ENCODE measurements at regions of chr9 and their contacts with region 1.

Region 1: GRCh38 chr9:105053209-105053652 is 125.3 kb upstream of the ABCA1 start:
- DNase-seq: peak; percentile 97 to 99 (median 99)
- H3K4me3 ChIP-seq: no peak overlapping the region
- H3K4me3 Mint-ChIP-seq: peak overlapping the region in 1 of 2 donors; percentile 77
- H3K27ac ChIP-seq: peak overlapping the region; percentile 90 to 99
- H3K27ac Mint-ChIP-seq: peak overlapping the region; percentile 93 to 99 (median 97)
- H3K4me1 ChIP-seq: peaks cover 32 to 34% of the 10 kb centered on the region in 2 donors
- H3K4me1 Mint-ChIP-seq: peaks cover 37% of the 10 kb centered on the region
- H3K27me3 ChIP-seq: no peaks in the 10 kb centered on the region
- H3K27me3 Mint-ChIP-seq: peaks cover 0 to 7% (median 0%) of the 10 kb centered on the region in 3 donors
- CTCF ChIP-seq: no peak

Region 2: GRCh38 chr9:104780799-104781395 is 272.3 kb before region 1 on chr9:
- intact Hi-C with region 1: loop called in 1 of 2 experiments (anchors 10 kb)
- DNase-seq: peak; percentile 54 to 79 (median 72)
- H3K4me3 ChIP-seq: no peak overlapping the region
- H3K4me3 Mint-ChIP-seq: peak overlapping the region in 1 of 2 donors; percentile 39
- H3K27ac ChIP-seq: peak overlapping the region in 1 of 2 donors; percentile 74
- H3K27ac Mint-ChIP-seq: peak overlapping the region; percentile 77 to 91 (median 88)
- H3K4me1 ChIP-seq: peaks cover 34 to 45% of the 10 kb centered on the region in 2 donors
- H3K4me1 Mint-ChIP-seq: peaks cover 22% of the 10 kb centered on the region
- H3K27me3 ChIP-seq: no peaks in the 10 kb centered on the region
- H3K27me3 Mint-ChIP-seq: no peaks in the 10 kb centered on the region
- CTCF ChIP-seq: peak; percentile 81

Region 3: DNA sequence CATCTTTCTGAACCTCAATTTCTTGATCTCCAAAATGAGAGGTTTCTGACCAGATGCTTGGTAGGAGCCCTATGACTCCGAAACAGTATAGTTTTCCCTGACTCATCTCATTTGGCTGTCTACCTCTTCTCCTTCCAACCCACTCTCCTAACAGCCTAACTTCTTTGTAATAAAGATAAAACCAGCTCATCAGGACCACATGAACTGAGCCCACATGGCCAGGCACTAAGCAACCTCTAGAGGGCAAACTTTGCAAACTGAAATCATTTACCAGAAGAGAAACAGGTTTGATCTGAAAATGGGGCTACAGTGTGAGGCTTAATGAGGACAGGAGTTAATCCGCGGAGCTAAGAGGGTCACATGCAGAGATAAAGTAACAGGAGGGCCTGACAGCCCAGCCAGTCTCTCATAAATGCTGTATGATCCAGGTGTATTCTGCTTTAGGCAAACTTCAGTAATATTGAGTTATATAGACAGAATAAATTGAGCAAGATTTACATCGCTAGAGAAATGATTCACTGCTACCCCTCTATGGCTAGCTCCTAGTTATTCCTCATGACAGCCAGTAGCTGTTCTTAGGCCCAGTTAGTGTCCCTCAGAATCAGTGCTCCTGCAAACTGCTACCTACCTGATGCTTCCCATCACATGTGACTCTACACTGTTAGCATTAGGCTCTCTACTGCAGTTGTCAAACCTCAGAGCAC is 189.9 kb before region 1 on chr9:
- intact Hi-C with region 1: loop called in 1 of 2 experiments (anchors 5 kb)
- DNase-seq: peak; percentile 61 to 71 (median 69)
- H3K4me3 ChIP-seq: no peak overlapping the region
- H3K4me3 Mint-ChIP-seq: no peak overlapping the region
- H3K27ac ChIP-seq: peak overlapping the region in 1 of 2 donors; percentile 24
- H3K27ac Mint-ChIP-seq: peak overlapping the region in 6 of 7 donors; percentile 38 to 76 (median 56)
- H3K4me1 ChIP-seq: peaks cover 51 to 74% of the 10 kb centered on the region in 2 donors
- H3K4me1 Mint-ChIP-seq: peaks cover 69% of the 10 kb centered on the region
- H3K27me3 ChIP-seq: no peaks in the 10 kb centered on the region
- H3K27me3 Mint-ChIP-seq: no peaks in the 10 kb centered on the region
- CTCF ChIP-seq: peak; percentile 81

Region 4: GRCh38 chr9:104991144-104991953 is 61.9 kb before region 1 on chr9:
- intact Hi-C with region 1: loop called in 1 of 2 experiments (anchors 5 kb)
- DNase-seq: peak; percentile 86 to 91 (median 89)
- H3K4me3 ChIP-seq: peak overlapping the region; percentile 46 to 81 (median 57)
- H3K4me3 Mint-ChIP-seq: peak overlapping the region; percentile 93 to 96
- H3K27ac ChIP-seq: peak overlapping the region; percentile 97
- H3K27ac Mint-ChIP-seq: peak overlapping the region; percentile 97 to 99 (median 98)
- H3K4me1 ChIP-seq: peaks cover 43 to 51% of the 10 kb centered on the region in 2 donors
- H3K4me1 Mint-ChIP-seq: peaks cover 46% of the 10 kb centered on the region
- H3K27me3 ChIP-seq: no peaks in the 10 kb centered on the region
- H3K27me3 Mint-ChIP-seq: peaks cover 0 to 9% (median 3%) of the 10 kb centered on the region in 3 donors
- CTCF ChIP-seq: no peak

Region 5: DNA sequence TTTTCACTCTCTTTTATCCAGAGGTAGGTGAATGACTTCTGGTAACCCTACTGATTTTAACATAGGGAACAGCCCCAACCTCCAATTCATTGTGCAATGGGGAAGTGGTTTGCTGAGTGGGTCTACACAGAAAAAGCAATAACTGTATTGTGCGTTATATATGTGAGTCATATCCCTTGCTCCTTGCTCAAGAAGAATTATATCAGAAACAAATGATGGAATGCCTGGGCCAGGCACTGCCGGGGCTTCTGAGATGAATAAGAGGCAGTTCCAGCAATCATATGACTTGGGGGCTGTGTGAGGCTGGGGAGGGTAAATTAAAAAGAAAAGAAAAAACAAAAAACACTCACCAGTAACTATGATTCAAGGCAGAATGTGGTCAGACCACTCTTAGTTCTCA is 46.1 kb before region 1 on chr9:
- intact Hi-C with region 1: loop called (anchors 5 kb)
- DNase-seq: peak; percentile 92 to 97 (median 97)
- H3K4me3 ChIP-seq: peak overlapping the region in 1 of 3 experiments; percentile 43
- H3K4me3 Mint-ChIP-seq: peak overlapping the region; percentile 54 to 79
- H3K27ac ChIP-seq: peak overlapping the region; percentile 70 to 75
- H3K27ac Mint-ChIP-seq: peak overlapping the region; percentile 92 to 97 (median 95)
- H3K4me1 ChIP-seq: peaks cover 49 to 58% of the 10 kb centered on the region in 2 donors
- H3K4me1 Mint-ChIP-seq: peaks cover 47% of the 10 kb centered on the region
- H3K27me3 ChIP-seq: no peaks in the 10 kb centered on the region
- H3K27me3 Mint-ChIP-seq: peaks cover 0 to 6% (median 3%) of the 10 kb centered on the region in 3 donors
- CTCF ChIP-seq: no peak

Region 6: DNA sequence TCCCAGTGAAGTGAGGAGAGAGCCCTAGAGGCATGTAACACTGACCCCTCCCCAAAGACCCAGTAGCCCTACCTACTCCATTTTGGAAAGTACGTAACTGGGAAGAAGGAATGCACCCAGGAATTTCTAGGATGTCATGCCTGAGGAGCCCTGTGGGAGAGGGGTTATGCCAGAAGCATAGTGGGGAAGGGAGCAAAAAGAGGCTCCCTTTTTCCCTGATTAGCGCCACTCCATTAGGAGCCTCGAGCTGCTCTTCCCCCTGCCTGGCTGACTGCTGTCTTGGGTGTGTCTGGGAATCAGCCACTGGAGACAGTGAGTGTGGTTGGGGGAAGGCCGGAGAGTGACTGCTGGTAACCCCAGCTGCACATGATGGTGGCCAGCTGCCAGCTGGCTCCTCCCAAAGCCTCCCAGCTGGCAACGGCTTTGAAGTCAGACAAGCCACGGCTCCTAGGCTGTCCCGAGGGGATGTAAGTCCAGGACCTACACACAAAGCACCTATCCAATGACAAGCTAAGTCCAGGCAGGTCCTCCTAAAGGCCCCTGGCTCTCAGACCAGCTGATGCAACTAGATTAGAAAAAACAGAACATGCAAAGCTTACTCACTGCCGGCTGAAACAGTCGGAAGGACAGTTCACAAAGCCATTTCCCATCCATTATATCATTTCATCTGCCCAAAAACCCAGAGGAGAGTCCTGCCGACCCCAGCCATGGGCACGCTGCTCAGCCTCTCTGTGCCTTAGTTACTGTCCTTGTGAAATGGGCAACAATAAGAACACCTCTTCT is 11.3 kb after region 1 on chr9:
- intact Hi-C with region 1: loop called in 1 of 2 experiments (anchors 1 kb)
- DNase-seq: peak; percentile 90 to 93 (median 91)
- H3K4me3 ChIP-seq: peak overlapping the region in 1 of 3 experiments; percentile 44
- H3K4me3 Mint-ChIP-seq: peak overlapping the region; percentile 64 to 85
- H3K27ac ChIP-seq: peak overlapping the region; percentile 97 to 99
- H3K27ac Mint-ChIP-seq: peak overlapping the region; percentile 96 to 99 (median 98)
- H3K4me1 ChIP-seq: peaks cover 56 to 57% of the 10 kb centered on the region in 2 donors
- H3K4me1 Mint-ChIP-seq: peaks cover 61% of the 10 kb centered on the region
- H3K27me3 ChIP-seq: no peaks in the 10 kb centered on the region
- H3K27me3 Mint-ChIP-seq: peaks cover 0 to 9% (median 1%) of the 10 kb centered on the region in 3 donors
- CTCF ChIP-seq: no peak

Region 7: DNA sequence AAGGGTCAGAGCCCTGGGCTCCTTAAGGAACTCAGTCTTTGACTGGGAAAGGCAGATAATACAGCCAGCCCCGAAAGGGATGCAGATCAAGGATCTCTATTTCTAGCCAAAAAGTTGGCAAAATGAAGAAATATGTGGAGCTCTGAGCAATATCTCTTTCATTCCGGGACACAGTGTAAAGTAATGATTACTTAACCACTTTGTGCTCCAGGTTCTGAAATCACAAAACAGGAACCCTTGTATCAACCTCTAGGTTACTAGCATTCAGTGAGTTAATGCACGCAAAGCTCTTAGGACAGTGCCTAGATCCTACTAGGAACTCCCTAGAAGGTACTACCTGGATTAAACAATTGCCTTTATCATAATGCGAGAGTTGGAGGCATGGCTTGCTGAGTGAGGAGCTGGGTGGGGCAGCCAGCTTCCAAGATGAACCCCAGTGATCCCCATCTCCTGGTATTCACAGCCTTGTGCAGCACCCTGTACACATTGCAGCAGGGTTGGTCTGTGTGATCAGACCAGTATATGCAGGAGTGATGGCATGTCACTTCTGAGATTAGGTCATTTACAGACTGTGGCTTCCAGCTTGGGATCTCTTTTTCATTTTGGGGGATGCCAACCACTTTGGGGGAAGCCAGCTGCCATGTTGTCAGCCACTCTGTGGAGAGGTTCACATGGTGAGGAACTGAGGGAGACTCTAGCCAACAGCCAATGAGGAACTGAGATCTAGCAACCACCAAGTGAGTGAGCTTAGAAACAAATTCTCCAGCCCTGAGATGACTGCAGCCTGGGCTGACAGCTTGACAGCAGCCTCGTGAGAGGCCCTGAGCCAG is 88.1 kb after region 1 on chr9:
- intact Hi-C with region 1: loop called in 1 of 2 experiments (anchors 5 kb)
- DNase-seq: peak; percentile 76 to 89 (median 81)
- H3K4me3 ChIP-seq: no peak overlapping the region
- H3K4me3 Mint-ChIP-seq: no peak overlapping the region
- H3K27ac ChIP-seq: peak overlapping the region; percentile 66 to 91
- H3K27ac Mint-ChIP-seq: peak overlapping the region; percentile 88 to 99 (median 92)
- H3K4me1 ChIP-seq: peaks cover 44 to 49% of the 10 kb centered on the region in 2 donors
- H3K4me1 Mint-ChIP-seq: peaks cover 47% of the 10 kb centered on the region
- H3K27me3 ChIP-seq: no peaks in the 10 kb centered on the region
- H3K27me3 Mint-ChIP-seq: peaks cover 0 to 3% (median 2%) of the 10 kb centered on the region in 3 donors
- CTCF ChIP-seq: no peak

Region 8: DNA sequence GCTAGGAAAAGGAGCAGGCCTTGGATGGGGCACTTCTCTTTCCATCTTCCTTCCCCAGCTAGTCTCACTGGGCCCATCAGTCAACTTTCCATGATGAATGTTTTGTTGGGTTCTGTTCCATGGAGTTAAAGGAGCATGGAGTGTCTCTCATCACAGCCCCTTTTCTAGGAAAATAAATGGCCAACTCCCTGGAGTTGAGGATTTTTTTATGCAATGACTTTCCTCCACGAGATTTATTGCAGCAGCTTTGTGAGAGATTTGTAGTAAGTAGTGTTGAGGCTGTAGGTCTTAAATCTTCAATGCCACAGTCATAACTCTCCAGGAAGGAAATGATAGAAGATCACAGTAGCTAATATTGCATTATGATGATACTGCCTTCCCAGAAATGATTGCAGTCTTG is 145.6 kb after region 1 on chr9:
- intact Hi-C with region 1: no loop called
- DNase-seq: no peak
- H3K4me3 ChIP-seq: no peak overlapping the region
- H3K4me3 Mint-ChIP-seq: no peak overlapping the region
- H3K27ac ChIP-seq: no peak overlapping the region
- H3K27ac Mint-ChIP-seq: peak overlapping the region in 1 of 7 donors; percentile 52
- H3K4me1 ChIP-seq: peaks cover 25 to 32% of the 10 kb centered on the region in 2 donors
- H3K4me1 Mint-ChIP-seq: peaks cover 34% of the 10 kb centered on the region
- H3K27me3 ChIP-seq: no peaks in the 10 kb centered on the region
- H3K27me3 Mint-ChIP-seq: peaks cover 0 to 2% (median 0%) of the 10 kb centered on the region in 3 donors
- CTCF ChIP-seq: no peak

Measured in CD14-positive monocyte (primary cell).